Activated CD4-positive, alpha-beta T cell treated with anti-CD3 and anti-CD28 coated beads for 36 hours (primary cell): ENCODE measurements at regions of chr6 and their contacts with region 1.

Region 1: GRCh38 chr6:87918461-87918941 is 129.1 kb upstream of the SPACA1 start:
- DNase-seq: no peak
- ATAC-seq: no peak
- H3K4me3 Mint-ChIP-seq: no peak overlapping the region
- H3K27ac Mint-ChIP-seq: no peak overlapping the region
- H3K4me1 Mint-ChIP-seq: peaks cover 14% of the 10 kb centered on the region
- H3K27me3 Mint-ChIP-seq: peaks cover 4% of the 10 kb centered on the region

Region 2: GRCh38 chr6:87907521-87907920 is 11.0 kb before region 1 on chr6:
- CTCF ChIA-PET with region 1: interaction called, 10 read pairs
- POLR2A ChIA-PET with region 1: no interaction called
- intact Hi-C with region 1: no loop called
- DNase-seq: peak; percentile 27
- ATAC-seq: peak; percentile 73
- H3K4me3 Mint-ChIP-seq: no peak overlapping the region
- H3K27ac Mint-ChIP-seq: no peak overlapping the region
- H3K4me1 Mint-ChIP-seq: peaks cover 27% of the 10 kb centered on the region
- H3K27me3 Mint-ChIP-seq: peaks cover 4% of the 10 kb centered on the region

Region 3: GRCh38 chr6:88584581-88585275 is 666.2 kb after region 1 on chr6:
- CTCF ChIA-PET with region 1: no interaction called
- POLR2A ChIA-PET with region 1: no interaction called
- intact Hi-C with region 1: no loop called
- DNase-seq: no peak
- ATAC-seq: no peak
- H3K4me3 Mint-ChIP-seq: no peak overlapping the region
- H3K27ac Mint-ChIP-seq: no peak overlapping the region
- H3K4me1 Mint-ChIP-seq: no peaks in the 10 kb centered on the region
- H3K27me3 Mint-ChIP-seq: peaks cover 21% of the 10 kb centered on the region